ENCODE measurements at regions of chr3 and their contacts with region 1.

Region 1: DNA sequence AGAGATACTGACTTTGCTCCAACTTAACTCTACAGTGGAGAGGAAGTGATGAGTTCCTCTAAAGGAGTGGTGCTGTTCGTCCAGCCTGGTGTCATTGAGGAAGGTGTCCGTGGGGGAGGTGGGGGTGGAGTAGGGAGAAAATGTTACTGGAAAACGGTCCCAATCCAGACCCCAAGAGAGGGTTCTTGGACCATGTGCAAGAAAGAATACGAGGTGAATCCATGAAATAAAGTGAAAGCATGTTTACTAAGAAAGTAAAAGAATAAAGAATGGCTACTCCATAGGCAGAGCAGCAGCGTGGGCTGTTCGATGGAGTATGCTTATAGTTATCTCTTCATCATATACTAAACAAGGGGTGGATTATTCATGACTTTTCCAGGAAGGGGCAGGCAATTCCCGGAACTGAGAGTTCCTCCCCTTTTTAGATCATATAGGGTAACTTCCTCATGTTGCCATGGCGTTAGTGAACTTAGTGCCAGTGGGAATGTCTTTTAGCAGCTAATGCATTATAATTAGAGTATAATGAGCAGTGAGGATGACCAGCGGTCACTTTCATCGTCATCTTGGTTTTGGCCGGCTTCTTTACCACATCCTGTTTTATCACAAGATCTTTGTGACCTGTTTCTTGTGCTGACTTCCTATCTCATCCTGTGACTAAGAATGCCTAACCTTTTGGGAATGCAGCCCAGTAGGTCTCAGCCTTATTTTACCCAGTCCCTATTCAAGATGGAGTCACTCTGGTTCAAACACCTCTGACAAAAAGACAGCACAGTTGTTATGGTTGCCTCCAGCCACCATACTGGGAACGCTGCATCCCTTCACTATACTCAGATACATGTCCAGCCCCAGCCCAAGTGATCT is 38.6 kb downstream of the CLEC3B start:
- DNase-seq: no peak
- H3K4me3 ChIP-seq: peak overlapping the region in 1 of 3 donors; percentile 35
- H3K27ac ChIP-seq: peak overlapping the region in 1 of 2 donors; percentile 75
- H3K4me1 ChIP-seq: no peaks in the 10 kb centered on the region
- H3K27me3 ChIP-seq: no peaks in the 10 kb centered on the region
- CTCF ChIP-seq: no peak
- POLR2A ChIP-seq: no peak

Region 2: GRCh38 chr3:44992555-44993470 is 71.9 kb before region 1 on chr3:
- intact Hi-C with region 1: loop called (anchors 2 kb)
- DNase-seq: no peak
- H3K4me3 ChIP-seq: no peak overlapping the region
- H3K27ac ChIP-seq: peak overlapping the region in 1 of 2 donors; percentile 71
- H3K4me1 ChIP-seq: no peaks in the 10 kb centered on the region
- H3K27me3 ChIP-seq: no peaks in the 10 kb centered on the region
- CTCF ChIP-seq: peak in 2 of 3 donors; percentile 12 to 37
- POLR2A ChIP-seq: no peak

Region 3: DNA sequence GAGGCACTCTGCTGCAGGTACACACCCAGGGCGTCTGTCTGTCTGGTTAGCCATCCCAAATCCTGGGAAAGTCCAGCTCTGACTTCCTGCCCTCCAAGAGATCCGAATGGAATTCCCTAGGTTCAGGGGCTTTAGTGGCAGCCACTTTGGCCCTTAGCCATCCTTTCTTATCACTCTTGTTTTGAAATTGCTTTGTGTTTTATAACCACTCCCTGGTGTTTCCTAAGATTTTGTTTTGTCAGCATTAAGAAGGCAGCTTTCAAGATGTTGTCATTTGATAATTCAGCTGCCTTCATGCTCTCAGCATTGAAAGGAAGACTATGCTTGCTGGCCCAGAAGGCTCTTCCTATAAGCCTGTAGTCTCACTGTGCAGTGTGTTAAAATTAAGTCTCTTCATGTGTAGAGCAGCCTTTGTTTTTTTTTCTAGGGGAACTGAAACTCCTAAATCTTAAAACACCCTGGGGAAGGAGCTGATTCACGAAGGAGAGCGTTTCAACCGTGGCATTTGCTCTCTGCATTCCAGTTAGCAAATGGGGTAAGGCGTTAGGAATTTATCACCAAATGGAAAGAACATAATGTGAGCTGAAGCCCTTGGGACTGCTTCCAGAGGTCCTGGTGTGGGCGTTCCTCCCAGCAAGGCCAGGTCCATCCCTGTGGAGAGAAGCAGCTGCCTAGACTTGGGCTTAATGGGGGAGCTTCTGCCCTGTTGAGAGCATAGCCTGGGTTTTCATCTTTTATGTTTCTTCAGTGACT is 52.8 kb before region 1 on chr3:
- intact Hi-C with region 1: no loop called
- DNase-seq: peak in 1 of 2 donors; percentile 58
- H3K4me3 ChIP-seq: peak overlapping the region in 1 of 3 donors; percentile 23
- H3K27ac ChIP-seq: peak overlapping the region; percentile 65 to 84
- H3K4me1 ChIP-seq: peaks cover 0 to 12% of the 10 kb centered on the region in 2 donors
- H3K27me3 ChIP-seq: no peaks in the 10 kb centered on the region
- CTCF ChIP-seq: no peak
- POLR2A ChIP-seq: no peak

Region 4: DNA sequence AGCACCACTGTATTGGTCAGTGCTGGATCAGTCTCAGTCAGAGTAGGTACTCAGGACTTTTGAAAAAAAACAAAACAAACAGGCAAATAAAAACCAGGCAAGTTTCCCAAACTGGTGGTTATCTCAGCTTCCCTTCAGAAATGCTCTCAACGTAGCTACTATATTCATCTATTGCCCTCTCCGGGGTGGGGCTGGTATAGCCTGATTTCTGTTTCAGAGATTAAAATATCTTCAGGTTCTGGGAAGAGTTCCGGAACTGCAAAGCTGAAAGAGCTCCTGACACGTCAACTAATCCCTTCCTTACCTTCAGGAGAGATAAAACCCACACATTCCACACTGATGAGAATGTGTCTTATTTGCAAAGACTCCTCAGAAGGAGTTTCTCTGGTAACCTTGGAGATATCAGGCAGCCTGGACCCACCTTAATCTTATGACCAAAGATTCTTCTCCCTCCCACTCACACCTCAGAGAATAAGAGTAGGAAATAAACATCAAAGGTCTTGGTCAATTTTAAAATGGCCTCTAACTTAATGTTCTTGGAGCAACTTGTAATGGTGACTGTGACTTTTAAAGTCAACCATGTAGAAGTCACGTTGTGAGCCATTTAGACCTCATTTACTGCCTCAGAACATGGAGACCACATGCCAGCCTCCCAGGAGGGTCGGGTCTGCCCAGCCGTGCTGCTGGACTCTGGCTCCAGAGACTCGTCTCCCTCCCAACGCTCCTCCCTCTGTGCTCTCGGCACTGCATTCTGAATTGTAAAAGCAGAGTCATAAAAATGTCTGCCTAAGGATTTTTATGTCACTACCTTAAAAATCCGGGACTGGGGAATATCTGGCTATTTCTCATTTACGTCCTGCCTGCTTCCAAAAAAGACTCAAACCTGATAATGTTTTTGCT is 27.6 kb after region 1 on chr3:
- intact Hi-C with region 1: no loop called
- DNase-seq: no peak
- H3K4me3 ChIP-seq: no peak overlapping the region
- H3K27ac ChIP-seq: no peak overlapping the region
- H3K4me1 ChIP-seq: no peaks in the 10 kb centered on the region
- H3K27me3 ChIP-seq: no peaks in the 10 kb centered on the region
- CTCF ChIP-seq: no peak
- POLR2A ChIP-seq: no peak

Measured in breast epithelium (tissue), 4 donors.